HEK293 (cell line): ENCODE measurements at regions of chr5 and their contacts with region 1.

Region 1: GRCh38 chr5:148443998-148444397 is 60.2 kb downstream of the FBXO38 start:
- H3K4me3 ChIP-seq: no peak overlapping the region
- H3K27ac ChIP-seq: no peak overlapping the region
- H3K4me1 ChIP-seq: no peaks in the 10 kb centered on the region
- CTCF ChIP-seq: 0 out of 2 replicates have a peak, but pooled peaks have one; percentile 9

Region 2: DNA sequence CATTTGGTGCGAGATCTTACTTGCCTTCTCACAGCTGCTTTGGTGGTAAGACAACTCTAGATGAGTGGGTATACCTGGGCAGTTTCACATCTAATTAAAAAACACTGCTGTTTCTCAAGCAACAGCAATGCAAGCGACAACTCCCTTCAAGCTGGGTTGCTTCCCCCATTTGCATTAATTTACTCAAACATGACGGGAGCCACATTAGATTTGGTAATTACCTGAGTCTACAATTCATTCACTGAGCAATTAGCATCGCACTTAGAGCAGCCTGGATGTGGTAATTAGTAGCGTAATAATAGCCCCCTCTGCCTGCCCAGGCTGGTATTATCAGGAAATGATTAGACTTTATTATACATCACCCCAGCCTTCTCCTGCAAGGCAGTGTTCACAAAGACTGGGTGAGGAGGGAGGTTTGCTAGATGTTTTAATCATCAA is 13.2 kb after region 1 on chr5:
- CTCF ChIA-PET with region 1: interaction called, 18 read pairs
- POLR2A ChIA-PET with region 1: interaction called, 3 read pairs
- H3K4me3 ChIP-seq: no peak overlapping the region
- H3K27ac ChIP-seq: no peak overlapping the region
- H3K4me1 ChIP-seq: no peaks in the 10 kb centered on the region
- CTCF ChIP-seq: 0 out of 2 replicates have a peak, but pooled peaks have one; percentile 24

Region 3: GRCh38 chr5:148687427-148687826 is 243.4 kb after region 1 on chr5:
- CTCF ChIA-PET with region 1: interaction called, 10 read pairs
- POLR2A ChIA-PET with region 1: no interaction called
- H3K4me3 ChIP-seq: no peak overlapping the region
- H3K27ac ChIP-seq: no peak overlapping the region
- H3K4me1 ChIP-seq: no peaks in the 10 kb centered on the region
- CTCF ChIP-seq: no peak